A673 (cell line): ENCODE measurements at regions of chr4 and their contacts with region 1.

Region 1: DNA sequence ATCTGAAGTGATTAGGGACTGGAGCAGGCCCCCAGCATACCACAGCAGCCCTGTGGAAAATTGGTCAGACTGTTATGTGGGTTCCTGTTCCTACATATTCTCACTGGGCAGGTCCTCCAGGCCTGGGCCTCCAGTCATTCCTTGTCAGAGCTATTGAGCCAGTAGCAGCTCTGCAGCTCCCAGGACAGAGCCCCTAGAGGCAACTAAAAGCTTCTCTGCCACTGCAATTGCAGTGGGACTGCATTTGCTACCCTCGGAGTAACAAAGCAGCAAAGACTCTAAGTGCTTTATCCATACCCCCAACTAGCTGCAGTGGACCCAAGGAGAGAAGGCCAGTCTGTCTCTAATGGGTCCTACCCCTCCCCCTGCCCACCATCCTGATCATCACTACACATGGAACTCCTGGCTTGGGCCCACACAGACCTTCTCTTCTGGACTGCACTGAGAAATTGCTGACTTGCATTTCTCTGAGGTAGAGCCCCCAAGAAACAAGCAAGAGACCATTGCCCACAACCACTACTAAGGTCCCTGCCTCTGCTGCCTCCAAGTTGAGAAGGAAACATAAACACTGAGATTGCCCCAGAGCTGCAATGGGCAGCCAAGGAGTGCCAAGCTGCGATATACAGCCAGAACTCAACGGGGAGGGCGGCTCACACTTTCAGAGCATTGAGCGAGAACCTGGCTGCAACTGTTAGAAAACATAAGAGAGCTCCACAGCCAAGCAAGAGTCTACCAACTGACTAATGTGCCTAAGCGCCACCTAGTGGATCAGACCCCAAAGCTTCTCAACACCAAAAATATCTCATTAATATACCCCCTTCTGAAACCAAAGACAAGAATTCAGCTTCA is 738.7 kb upstream of the NDST4 start:
- DNase-seq: peak; percentile 87
- H3K4me3 ChIP-seq: no peak overlapping the region
- H3K27ac ChIP-seq: no peak overlapping the region
- H3K4me1 ChIP-seq: peaks cover 5% of the 10 kb centered on the region
- H3K27me3 ChIP-seq: no peaks in the 10 kb centered on the region
- CTCF ChIP-seq: peak; percentile 86

Region 2: GRCh38 chr4:115119804-115120352 is 732.3 kb before region 1 on chr4:
- CTCF ChIA-PET with region 1: interaction called, 5 read pairs
- POLR2A ChIA-PET with region 1: no interaction called
- intact Hi-C with region 1: loop called (anchors 5 kb)
- DNase-seq: peak; percentile 67
- H3K4me3 ChIP-seq: no peak overlapping the region
- H3K27ac ChIP-seq: peak overlapping the region; percentile 25
- H3K4me1 ChIP-seq: peaks cover 45% of the 10 kb centered on the region
- H3K27me3 ChIP-seq: no peaks in the 10 kb centered on the region
- CTCF ChIP-seq: peak; percentile 52

Region 3: GRCh38 chr4:115154826-115155225 is 697.3 kb before region 1 on chr4:
- CTCF ChIA-PET with region 1: no interaction called
- POLR2A ChIA-PET with region 1: no interaction called
- intact Hi-C with region 1: loop called (anchors 10 kb)
- DNase-seq: peak; percentile 63
- H3K4me3 ChIP-seq: no peak overlapping the region
- H3K27ac ChIP-seq: no peak overlapping the region
- H3K4me1 ChIP-seq: no peaks in the 10 kb centered on the region
- H3K27me3 ChIP-seq: no peaks in the 10 kb centered on the region
- CTCF ChIP-seq: peak; percentile 57

Region 4: GRCh38 chr4:115234405-115235093 is 617.6 kb before region 1 on chr4:
- CTCF ChIA-PET with region 1: interaction called, 12 read pairs
- POLR2A ChIA-PET with region 1: no interaction called
- intact Hi-C with region 1: loop called (anchors 2 kb)
- DNase-seq: peak; percentile 86
- H3K4me3 ChIP-seq: no peak overlapping the region
- H3K27ac ChIP-seq: peak overlapping the region; percentile 41
- H3K4me1 ChIP-seq: peaks cover 33% of the 10 kb centered on the region
- H3K27me3 ChIP-seq: no peaks in the 10 kb centered on the region
- CTCF ChIP-seq: peak; percentile 68

Region 5: GRCh38 chr4:115537387-115537786 is 314.8 kb before region 1 on chr4:
- CTCF ChIA-PET with region 1: interaction called, 4 read pairs
- POLR2A ChIA-PET with region 1: no interaction called
- intact Hi-C with region 1: loop called (anchors 2 kb)
- DNase-seq: peak; percentile 48
- H3K4me3 ChIP-seq: no peak overlapping the region
- H3K27ac ChIP-seq: no peak overlapping the region
- H3K4me1 ChIP-seq: peaks cover 14% of the 10 kb centered on the region
- H3K27me3 ChIP-seq: no peaks in the 10 kb centered on the region
- CTCF ChIP-seq: peak; percentile 56; the same call in 1 of the 2 replicates